Common myeloid progenitor, CD34-positive (primary cell): ENCODE measurements at regions of chr13 and their contacts with region 1.

Region 1: GRCh38 chr13:46622630-46623256 is 69.8 kb downstream of the LRCH1 start:
- DNase-seq: no peak
- H3K4me3 ChIP-seq: no peak overlapping the region
- H3K27ac ChIP-seq: no peak overlapping the region
- H3K4me1 ChIP-seq: peaks cover 7 to 24% (median 10%) of the 10 kb centered on the region in 4 experiments
- H3K27me3 ChIP-seq: no peaks in the 10 kb centered on the region

Region 2: GRCh38 chr13:45781553-45782326 is 841.0 kb before region 1 on chr13:
- CTCF ChIA-PET with region 1: no interaction called
- POLR2A ChIA-PET with region 1: no interaction called
- DNase-seq: peak in 2 of 3 donors; percentile 15 to 26
- H3K4me3 ChIP-seq: peak overlapping the region in 1 of 7 experiments; percentile 36
- H3K27ac ChIP-seq: no peak overlapping the region
- H3K4me1 ChIP-seq: peaks cover 0 to 23% (median 5%) of the 10 kb centered on the region in 4 experiments
- H3K27me3 ChIP-seq: no peaks in the 10 kb centered on the region

Region 3: GRCh38 chr13:46369506-46370277 is 253.1 kb before region 1 on chr13:
- CTCF ChIA-PET with region 1: no interaction called
- POLR2A ChIA-PET with region 1: no interaction called
- DNase-seq: peak in 2 of 3 donors; percentile 44 to 52
- H3K4me3 ChIP-seq: no peak overlapping the region
- H3K27ac ChIP-seq: no peak overlapping the region
- H3K4me1 ChIP-seq: peaks cover 5 to 16% (median 11%) of the 10 kb centered on the region in 4 experiments
- H3K27me3 ChIP-seq: no peaks in the 10 kb centered on the region

Region 4: DNA sequence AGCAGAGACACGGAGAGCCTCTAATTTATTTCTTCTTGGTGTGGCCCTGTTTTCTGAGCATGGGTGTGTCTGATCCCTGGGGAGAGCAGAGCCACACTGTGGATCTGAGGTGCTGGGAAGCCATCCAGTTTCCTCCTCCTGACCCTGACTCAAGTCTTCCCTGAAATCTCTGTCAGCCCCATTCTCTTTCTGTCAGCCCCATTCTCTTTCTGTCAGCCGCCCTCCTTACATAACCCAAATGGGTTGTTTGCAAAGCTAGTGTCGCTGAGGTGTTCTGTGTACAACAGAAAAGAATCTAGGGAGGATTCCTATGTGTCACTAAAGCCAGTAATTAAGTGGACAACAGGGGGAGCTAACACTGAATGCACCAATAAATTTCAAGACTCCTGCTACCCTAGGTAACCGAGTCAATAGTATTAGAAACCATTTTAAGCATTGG is 19.6 kb before region 1 on chr13:
- CTCF ChIA-PET with region 1: interaction called, 17 read pairs
- POLR2A ChIA-PET with region 1: no interaction called
- DNase-seq: peak in 2 of 3 donors; percentile 44 to 58
- H3K4me3 ChIP-seq: no peak overlapping the region
- H3K27ac ChIP-seq: no peak overlapping the region
- H3K4me1 ChIP-seq: peaks cover 22 to 76% (median 54%) of the 10 kb centered on the region in 4 experiments
- H3K27me3 ChIP-seq: no peaks in the 10 kb centered on the region

Region 5: GRCh38 chr13:46655377-46656180 is 32.8 kb after region 1 on chr13:
- CTCF ChIA-PET with region 1: no interaction called
- POLR2A ChIA-PET with region 1: no interaction called
- DNase-seq: peak in 1 of 3 donors; percentile 60
- H3K4me3 ChIP-seq: peak overlapping the region in 4 of 7 experiments; percentile 31 to 63 (median 50)
- H3K27ac ChIP-seq: peak overlapping the region; percentile 48 to 83
- H3K4me1 ChIP-seq: peaks cover 0 to 34% (median 20%) of the 10 kb centered on the region in 4 experiments
- H3K27me3 ChIP-seq: no peaks in the 10 kb centered on the region